ENCODE measurements at regions of chr6 and their contacts with region 1.

Region 1: DNA sequence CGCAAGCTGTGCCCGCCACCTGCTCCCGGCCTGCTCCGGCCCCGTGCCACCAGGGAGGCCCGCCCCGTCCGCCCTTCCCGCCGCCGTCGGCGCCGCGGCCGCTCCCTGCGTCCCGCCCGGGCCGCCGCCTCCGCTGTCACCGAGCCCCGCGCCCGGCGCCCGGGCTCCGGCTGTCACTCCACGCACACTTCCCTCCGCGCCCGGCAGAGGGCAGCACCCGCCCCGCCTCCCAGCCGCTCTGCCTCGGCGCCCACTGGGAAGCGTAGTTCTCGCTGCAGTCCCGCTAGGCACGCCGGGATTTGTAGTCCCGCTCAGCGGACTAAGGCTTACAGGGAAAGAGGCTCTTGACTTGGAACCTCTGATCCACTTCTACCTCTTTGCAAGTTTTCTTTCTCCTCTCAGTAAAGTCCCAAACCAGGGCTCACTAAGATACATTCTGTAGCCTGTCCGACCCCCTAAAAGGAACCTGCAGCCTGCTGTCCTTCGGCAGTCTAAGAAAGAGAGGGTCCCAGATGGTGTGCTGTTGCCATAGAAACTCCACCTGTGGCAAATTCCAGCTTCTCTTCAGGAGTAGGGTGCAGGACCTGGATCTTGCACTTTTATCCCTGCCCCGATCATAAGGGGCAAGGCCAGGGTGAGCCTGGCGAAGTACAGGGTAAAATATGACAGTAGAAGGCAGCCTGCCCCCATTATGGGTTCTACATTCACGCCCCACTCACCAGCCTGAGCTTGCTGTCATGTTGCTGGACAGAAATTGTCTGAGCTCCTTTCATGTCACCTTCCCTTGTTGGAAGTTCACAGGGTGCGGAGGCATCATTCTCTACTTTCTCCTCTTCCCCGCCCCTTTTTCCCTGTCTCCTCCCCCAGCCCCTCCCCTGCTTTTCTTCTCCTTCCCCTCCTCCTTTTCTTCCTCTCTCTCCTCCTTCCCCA is at the start of gene TFEB:
- DNase-seq: peak; percentile 99
- ATAC-seq: peak; percentile 41
- H3K4me3 Mint-ChIP-seq: peak within 1 kb of the TSS; percentile 84
- H3K27ac Mint-ChIP-seq: peak within 1 kb of the TSS; percentile 84
- H3K4me1 Mint-ChIP-seq: peaks cover 28% of the 10 kb centered on the region
- H3K27me3 Mint-ChIP-seq: no peaks in the 10 kb centered on the region
- CTCF ChIP-seq: peak; percentile 26
- total RNA-seq, gene TFEB: 203 and 205 TPM in 2 replicates

Region 2: GRCh38 chr6:41545703-41546474 is 189.8 kb before region 1 on chr6 and contains the start of gene FOXP4:
- CTCF ChIA-PET with region 1: no interaction called
- POLR2A ChIA-PET with region 1: interaction called, 9 read pairs
- intact Hi-C with region 1: loop called (anchors 5 kb)
- DNase-seq: peak; percentile 76
- ATAC-seq: peak; percentile 77
- H3K4me3 Mint-ChIP-seq: peak within 1 kb of the TSS; percentile 97
- H3K27ac Mint-ChIP-seq: peak within 1 kb of the TSS; percentile 91
- H3K4me1 Mint-ChIP-seq: peaks cover 43% of the 10 kb centered on the region
- H3K27me3 Mint-ChIP-seq: no peaks in the 10 kb centered on the region
- CTCF ChIP-seq: no peak
- total RNA-seq, gene FOXP4: 37.8 and 40.7 TPM in 2 replicates

Region 3: GRCh38 chr6:41683510-41684310 is 52.0 kb before region 1 on chr6:
- CTCF ChIA-PET with region 1: interaction called, 32 read pairs
- POLR2A ChIA-PET with region 1: interaction called, 126 read pairs
- intact Hi-C with region 1: loop called (anchors 1 kb)
- DNase-seq: peak; percentile 78
- ATAC-seq: peak; percentile 82
- H3K4me3 Mint-ChIP-seq: peak overlapping the region; percentile 78
- H3K27ac Mint-ChIP-seq: peak overlapping the region; percentile 83
- H3K4me1 Mint-ChIP-seq: peaks cover 20% of the 10 kb centered on the region
- H3K27me3 Mint-ChIP-seq: no peaks in the 10 kb centered on the region
- CTCF ChIP-seq: peak; percentile 54

Region 4: GRCh38 chr6:41705996-41706835 is 29.5 kb before region 1 on chr6:
- CTCF ChIA-PET with region 1: interaction called, 196 read pairs
- POLR2A ChIA-PET with region 1: interaction called, 1,669 read pairs
- intact Hi-C with region 1: loop called (anchors 1 kb)
- DNase-seq: peak; percentile 83
- ATAC-seq: peak; percentile 81
- H3K4me3 Mint-ChIP-seq: peak overlapping the region; percentile 89
- H3K27ac Mint-ChIP-seq: peak overlapping the region; percentile 97
- H3K4me1 Mint-ChIP-seq: peaks cover 99% of the 10 kb centered on the region
- H3K27me3 Mint-ChIP-seq: no peaks in the 10 kb centered on the region
- CTCF ChIP-seq: peak; percentile 54

Region 5: GRCh38 chr6:41779793-41780545 is 44.3 kb after region 1 on chr6 and contains the start of gene FRS3:
- CTCF ChIA-PET with region 1: interaction called, 3 read pairs
- POLR2A ChIA-PET with region 1: interaction called, 39 read pairs
- intact Hi-C with region 1: loop called (anchors 1 kb)
- DNase-seq: peak; percentile 100
- ATAC-seq: peak; percentile 95
- H3K4me3 Mint-ChIP-seq: peak within 1 kb of the TSS; percentile 93
- H3K27ac Mint-ChIP-seq: peak within 1 kb of the TSS; percentile 63
- H3K4me1 Mint-ChIP-seq: peaks cover 25% of the 10 kb centered on the region
- H3K27me3 Mint-ChIP-seq: no peaks in the 10 kb centered on the region
- CTCF ChIP-seq: no peak
- total RNA-seq, gene FRS3: 6.5 and 6.7 TPM in 2 replicates

Region 6: GRCh38 chr6:42217519-42218367 is 482.1 kb after region 1 on chr6 and contains the start of gene MRPS10:
- CTCF ChIA-PET with region 1: no interaction called
- POLR2A ChIA-PET with region 1: interaction called, 3 read pairs
- intact Hi-C with region 1: loop called (anchors 1 kb)
- DNase-seq: peak; percentile 76
- ATAC-seq: peak; percentile 99
- H3K4me3 Mint-ChIP-seq: peak within 1 kb of the TSS; percentile 99
- H3K27ac Mint-ChIP-seq: peak within 1 kb of the TSS; percentile 95
- H3K4me1 Mint-ChIP-seq: peaks cover 30% of the 10 kb centered on the region
- H3K27me3 Mint-ChIP-seq: no peaks in the 10 kb centered on the region
- CTCF ChIP-seq: no peak
- total RNA-seq, gene MRPS10: 35.7 and 37.0 TPM in 2 replicates